ENCODE measurements at regions of chr18 and their contacts with region 1.

Region 1: GRCh38 chr18:13611601-13612195 is 114.7 kb downstream of the FAM210A start:
- DNase-seq: no peak
- H3K4me3 Mint-ChIP-seq: peak overlapping the region; percentile 78
- H3K27ac Mint-ChIP-seq: peak overlapping the region; percentile 90
- H3K4me1 Mint-ChIP-seq: peaks cover 82% of the 10 kb centered on the region
- H3K27me3 Mint-ChIP-seq: no peaks in the 10 kb centered on the region

Region 2: GRCh38 chr18:13435596-13436327 is 175.9 kb before region 1 on chr18:
- intact Hi-C with region 1: loop called (anchors 5 kb)
- DNase-seq: no peak
- H3K4me3 Mint-ChIP-seq: no peak overlapping the region
- H3K27ac Mint-ChIP-seq: peak overlapping the region; percentile 54
- H3K4me1 Mint-ChIP-seq: peaks cover 56% of the 10 kb centered on the region
- H3K27me3 Mint-ChIP-seq: no peaks in the 10 kb centered on the region

Region 3: DNA sequence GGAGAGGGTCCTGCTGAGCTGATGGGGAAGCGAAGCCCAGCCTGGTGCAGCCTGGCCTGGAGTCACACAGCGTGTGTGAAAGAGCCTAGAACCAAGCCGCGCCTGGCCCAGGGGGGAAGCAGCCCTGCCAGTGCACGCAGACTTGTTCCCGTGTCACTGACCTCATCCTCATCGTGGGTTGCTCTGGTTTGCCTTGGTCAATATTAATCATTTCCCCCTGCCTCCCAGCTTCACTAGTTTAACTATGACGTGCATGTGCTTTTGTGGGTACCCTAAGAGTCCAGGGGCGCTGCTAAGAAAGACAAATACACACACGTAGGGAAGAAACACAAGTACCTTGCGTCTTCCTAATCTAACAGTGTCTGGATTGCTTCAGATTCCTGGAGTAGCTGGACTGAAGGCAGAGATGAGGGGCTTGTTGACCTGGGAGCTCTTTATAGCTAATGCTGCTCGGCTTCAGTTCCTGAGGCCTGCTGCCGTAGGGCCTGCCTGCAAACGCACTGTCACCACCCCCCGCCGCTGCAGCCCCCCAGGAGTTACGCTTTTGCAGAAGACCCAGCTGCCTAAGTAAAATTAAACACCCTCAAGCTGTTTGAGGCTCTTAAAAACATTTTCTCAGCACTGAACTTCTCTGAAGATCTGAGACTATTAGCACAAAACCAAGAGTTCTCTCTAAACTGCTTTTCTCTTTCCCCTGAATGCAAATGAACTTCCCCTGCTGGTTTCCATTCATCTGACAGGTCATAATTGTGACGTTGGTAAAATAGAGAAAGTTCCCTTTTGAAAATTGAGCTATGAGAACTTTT is 44.6 kb before region 1 on chr18:
- intact Hi-C with region 1: loop called (anchors 1 kb)
- DNase-seq: no peak
- H3K4me3 Mint-ChIP-seq: peak overlapping the region; percentile 57
- H3K27ac Mint-ChIP-seq: peak overlapping the region; percentile 94
- H3K4me1 Mint-ChIP-seq: peaks cover 67% of the 10 kb centered on the region
- H3K27me3 Mint-ChIP-seq: no peaks in the 10 kb centered on the region

Region 4: GRCh38 chr18:13577091-13577697 is 34.5 kb before region 1 on chr18:
- intact Hi-C with region 1: loop called (anchors 1 kb)
- DNase-seq: peak; percentile 48
- H3K4me3 Mint-ChIP-seq: peak overlapping the region; percentile 61
- H3K27ac Mint-ChIP-seq: peak overlapping the region; percentile 82
- H3K4me1 Mint-ChIP-seq: peaks cover 45% of the 10 kb centered on the region
- H3K27me3 Mint-ChIP-seq: no peaks in the 10 kb centered on the region

Region 5: DNA sequence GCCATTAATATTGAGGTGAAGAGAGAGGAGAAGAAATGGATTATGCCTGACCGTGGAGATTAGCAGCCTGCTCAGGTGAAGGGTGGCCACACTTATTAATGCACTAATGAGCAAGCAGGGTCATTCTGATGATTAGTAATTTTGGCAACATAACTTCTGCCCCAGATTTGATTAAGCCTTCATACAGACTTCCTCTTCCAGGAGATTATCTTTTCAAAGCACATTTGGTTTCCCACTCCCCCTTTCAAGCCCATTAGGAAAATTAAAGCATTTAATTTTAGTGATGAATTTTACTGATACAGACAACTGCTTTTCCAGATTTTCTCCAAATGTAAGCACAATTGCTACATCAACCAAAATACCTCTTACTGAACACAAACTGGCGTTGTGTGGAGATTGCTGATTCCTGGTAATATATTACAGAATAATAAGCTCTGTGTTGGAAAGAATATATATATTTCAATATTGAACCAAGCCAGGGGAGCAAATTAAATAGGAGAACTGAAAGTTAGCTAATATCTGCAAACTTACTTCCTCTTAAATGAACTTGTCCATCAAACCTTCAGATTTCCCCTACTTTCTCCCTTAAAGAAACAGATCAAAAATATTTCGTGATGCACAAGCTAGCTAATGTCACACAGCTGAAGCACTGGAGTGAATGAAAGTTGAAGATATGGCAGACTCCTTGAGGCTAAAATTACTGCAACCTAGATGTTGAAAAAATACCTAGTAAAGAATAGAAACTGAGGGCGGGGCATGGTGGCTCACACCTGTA is 26.1 kb before region 1 on chr18:
- intact Hi-C with region 1: loop called (anchors 2 kb)
- DNase-seq: no peak
- H3K4me3 Mint-ChIP-seq: no peak overlapping the region
- H3K27ac Mint-ChIP-seq: peak overlapping the region; percentile 5
- H3K4me1 Mint-ChIP-seq: peaks cover 52% of the 10 kb centered on the region
- H3K27me3 Mint-ChIP-seq: no peaks in the 10 kb centered on the region